ENCODE measurements at regions of chr3 and their contacts with region 1.

Region 1: DNA sequence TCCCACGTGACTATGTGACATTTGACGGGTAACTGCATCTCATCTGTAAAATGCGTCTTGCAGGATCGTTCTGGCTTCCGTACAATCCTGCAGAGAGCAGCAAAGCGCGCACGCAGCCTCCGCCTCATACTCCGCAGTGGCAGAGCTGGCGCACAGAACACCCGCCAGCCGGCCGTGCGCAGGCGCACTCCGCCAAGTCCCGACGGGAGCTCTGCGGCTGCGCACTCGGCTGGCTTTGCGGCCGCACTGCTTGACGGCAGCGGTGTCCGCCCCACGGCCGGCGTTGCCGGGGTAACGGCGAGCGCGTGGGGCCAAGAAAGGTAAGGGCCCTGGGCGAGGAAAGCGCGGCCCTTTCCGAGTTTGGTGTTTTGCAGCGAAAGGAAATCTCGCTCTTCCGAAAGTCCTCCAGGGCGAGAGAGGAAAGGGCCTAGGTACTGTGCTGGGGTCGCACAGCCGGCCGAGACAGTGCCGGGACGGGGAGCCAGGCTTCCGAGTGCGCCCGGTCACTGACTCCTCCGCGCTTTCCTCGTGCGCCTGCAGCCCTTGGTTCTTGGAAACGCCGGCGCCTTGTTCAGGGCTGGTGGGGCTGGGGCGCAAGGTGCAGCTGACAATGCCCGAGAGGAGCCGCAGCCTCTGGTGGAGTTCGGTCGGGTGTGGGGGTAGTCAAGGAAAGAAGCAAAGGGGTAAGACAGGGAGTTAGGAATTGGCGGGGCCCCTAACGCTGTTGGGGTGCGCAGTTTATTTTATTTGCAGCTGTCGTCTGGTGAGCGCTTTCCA is at the start of gene TSEN2:
- DNase-seq: peak; percentile 94
- ATAC-seq: peak; percentile 96
- H3K4me3 ChIP-seq: peak within 1 kb of the TSS; percentile 78
- H3K27ac ChIP-seq: peak within 1 kb of the TSS; percentile 76
- H3K4me1 ChIP-seq: no peaks in the 10 kb centered on the region; the same call in 1 of the 2 replicates
- H3K27me3 ChIP-seq: no peaks in the 10 kb centered on the region
- CTCF ChIP-seq: peak; percentile 47
- POLR2A ChIP-seq: no peak
- RAD21 ChIP-seq: peak; percentile 54
- total RNA-seq, gene TSEN2: 14.2 and 15.0 TPM in 2 replicates

Region 2: DNA sequence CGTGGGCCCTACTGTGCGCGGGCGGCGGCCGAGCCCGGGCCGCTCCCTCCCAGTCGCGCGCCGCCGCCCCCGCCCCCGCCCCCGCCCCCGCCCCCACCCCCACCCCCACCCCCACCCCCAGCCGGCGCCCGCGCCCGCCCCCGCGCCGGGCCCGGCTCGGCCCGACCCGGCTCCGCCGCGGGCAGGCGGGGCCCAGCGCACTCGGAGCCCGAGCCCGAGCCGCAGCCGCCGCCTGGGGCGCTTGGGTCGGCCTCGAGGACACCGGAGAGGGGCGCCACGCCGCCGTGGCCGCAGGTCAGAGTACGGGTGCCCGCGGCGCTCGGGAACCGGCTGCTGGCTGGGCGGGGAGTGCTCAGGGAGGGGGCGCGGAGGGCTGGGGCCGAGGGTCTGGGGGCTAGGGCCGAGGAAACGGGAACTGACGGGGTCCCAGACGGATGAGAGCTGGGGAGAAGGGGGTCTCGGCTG is 196.6 kb before region 1 on chr3:
- CTCF ChIA-PET with region 1: no interaction called
- POLR2A ChIA-PET with region 1: no interaction called
- dilution Hi-C with region 1: no loop called
- in situ Hi-C with region 1: no loop called
- intact Hi-C with region 1: loop called (anchors 1 kb)
- DNase-seq: no peak
- ATAC-seq: peak; percentile 87
- H3K4me3 ChIP-seq: peak overlapping the region; percentile 95
- H3K27ac ChIP-seq: peak overlapping the region; percentile 50
- H3K4me1 ChIP-seq: peaks cover 2% of the 10 kb centered on the region
- H3K27me3 ChIP-seq: no peaks in the 10 kb centered on the region
- CTCF ChIP-seq: no peak
- POLR2A ChIP-seq: no peak
- RAD21 ChIP-seq: peak; percentile 38

Measured in IMR-90 (cell line).